Colonic mucosa (tissue), 4 donors: ENCODE measurements at regions of chr7 and their contacts with region 1.

Region 1: GRCh38 chr7:31443457-31443856 is 70.4 kb upstream of the ITPRID1 start:
- DNase-seq: no peak
- H3K4me3 ChIP-seq: no peak overlapping the region
- H3K27ac ChIP-seq: no peak overlapping the region
- H3K4me1 ChIP-seq: no peaks in the 10 kb centered on the region
- H3K27me3 ChIP-seq: no peaks in the 10 kb centered on the region
- CTCF ChIP-seq: peak; percentile 76

Region 2: GRCh38 chr7:31488562-31489203 is 45.2 kb after region 1 on chr7:
- intact Hi-C with region 1: loop called (anchors 5 kb)
- DNase-seq: peak; percentile 60
- H3K4me3 ChIP-seq: no peak overlapping the region
- H3K27ac ChIP-seq: no peak overlapping the region
- H3K4me1 ChIP-seq: no peaks in the 10 kb centered on the region
- H3K27me3 ChIP-seq: no peaks in the 10 kb centered on the region
- CTCF ChIP-seq: peak; percentile 69

Region 3: DNA sequence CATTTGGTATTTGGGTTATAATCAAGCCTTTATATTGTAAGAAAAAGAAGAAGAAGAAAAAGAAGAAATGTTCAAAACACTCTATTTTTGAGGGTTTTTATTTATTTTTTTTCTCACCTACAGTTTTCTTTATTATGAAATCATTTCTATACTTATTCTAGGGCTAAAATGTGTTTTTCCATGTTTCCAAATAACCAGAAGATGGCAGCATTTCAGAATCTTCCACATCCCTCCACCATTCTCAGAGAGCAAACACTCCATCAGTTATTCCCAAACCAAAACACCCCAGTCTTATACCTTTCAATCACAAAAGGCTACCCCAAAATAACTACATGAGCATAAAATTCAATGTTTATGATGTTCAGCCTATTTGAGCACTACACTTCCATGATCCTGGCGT is 204.8 kb after region 1 on chr7:
- intact Hi-C with region 1: no loop called
- DNase-seq: no peak
- H3K4me3 ChIP-seq: no peak overlapping the region
- H3K27ac ChIP-seq: no peak overlapping the region
- H3K4me1 ChIP-seq: no peaks in the 10 kb centered on the region
- H3K27me3 ChIP-seq: no peaks in the 10 kb centered on the region
- CTCF ChIP-seq: no peak

Region 4: GRCh38 chr7:31735991-31736982 is 292.8 kb after region 1 on chr7:
- intact Hi-C with region 1: loop called (anchors 10 kb)
- DNase-seq: peak; percentile 60
- H3K4me3 ChIP-seq: no peak overlapping the region
- H3K27ac ChIP-seq: no peak overlapping the region
- H3K4me1 ChIP-seq: no peaks in the 10 kb centered on the region
- H3K27me3 ChIP-seq: no peaks in the 10 kb centered on the region
- CTCF ChIP-seq: peak; percentile 74